ENCODE measurements at regions of chr3 and their contacts with region 1.

Region 1: DNA sequence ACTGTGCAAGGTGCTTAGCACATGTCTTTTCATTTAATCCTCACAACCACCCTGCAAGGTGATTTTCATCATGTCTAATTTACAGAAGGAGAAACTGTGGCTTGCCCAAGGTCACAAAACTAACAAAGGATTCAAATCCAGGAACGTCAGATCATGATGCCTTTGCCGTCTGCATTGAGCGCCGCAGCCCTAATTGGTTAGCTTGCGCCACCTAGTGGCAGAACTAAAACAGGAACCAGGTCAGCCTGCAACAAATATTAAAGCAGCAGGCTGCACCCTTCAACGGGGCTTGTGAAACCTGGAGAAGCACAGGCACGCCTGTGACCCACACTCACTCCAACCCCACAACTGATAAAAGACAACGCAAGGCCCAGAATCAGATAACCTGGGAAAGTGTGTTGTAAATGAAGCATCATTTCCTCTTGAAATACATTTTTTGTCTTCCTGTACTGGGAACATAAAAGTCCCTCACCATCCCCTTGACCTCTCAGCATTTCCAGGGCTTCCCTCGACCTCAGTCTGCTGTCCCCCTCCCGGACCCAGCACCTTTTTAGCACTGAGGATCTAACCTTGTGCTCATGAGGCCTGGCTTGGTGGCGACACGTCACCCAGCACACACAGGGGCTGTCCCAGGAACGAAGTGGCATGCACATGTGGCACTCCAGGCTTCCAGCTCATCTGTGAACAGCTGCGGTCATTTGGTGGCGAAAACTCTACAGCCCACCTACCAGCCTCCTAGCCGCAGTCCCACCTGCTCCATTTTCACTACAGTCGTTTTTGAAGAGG is 17.3 kb downstream of the DPH3 start:
- DNase-seq: peak; percentile 74 to 88 (median 82)
- ATAC-seq: peak; percentile 94
- H3K4me3 ChIP-seq: no peak overlapping the region
- H3K27ac ChIP-seq: no peak overlapping the region
- H3K4me1 ChIP-seq: peaks cover 0 to 14% of the 10 kb centered on the region in 2 donors
- H3K27me3 ChIP-seq: no peaks in the 10 kb centered on the region
- CTCF ChIP-seq: peak; percentile 88 to 90

Region 2: GRCh38 chr3:15815696-15816095 is 431.8 kb before region 1 on chr3:
- intact Hi-C with region 1: loop called in 1 of 2 experiments (anchors 5 kb)
- DNase-seq: peak in 2 of 4 donors; percentile 42 to 65
- ATAC-seq: peak; percentile 71
- H3K4me3 ChIP-seq: no peak overlapping the region
- H3K27ac ChIP-seq: no peak overlapping the region
- H3K4me1 ChIP-seq: peaks cover 0 to 13% of the 10 kb centered on the region in 2 donors
- H3K27me3 ChIP-seq: no peaks in the 10 kb centered on the region
- CTCF ChIP-seq: peak; percentile 30 to 32

Region 3: GRCh38 chr3:16048435-16049318 is 198.8 kb before region 1 on chr3:
- intact Hi-C with region 1: loop called in 1 of 2 experiments (anchors 5 kb)
- DNase-seq: peak in 1 of 4 donors; percentile 73
- ATAC-seq: peak; percentile 97
- H3K4me3 ChIP-seq: no peak overlapping the region
- H3K27ac ChIP-seq: no peak overlapping the region
- H3K4me1 ChIP-seq: peaks cover 0 to 20% of the 10 kb centered on the region in 2 donors
- H3K27me3 ChIP-seq: no peaks in the 10 kb centered on the region
- CTCF ChIP-seq: peak; percentile 73 to 78